Activated CD8-positive, alpha-beta T cell treated with anti-CD3 and anti-CD28 coated beads for 36 hours (primary cell): ENCODE measurements at regions of chr6 and their contacts with region 1.

Region 1: GRCh38 chr6:11496152-11497060 is 41.1 kb upstream of the TMEM170B start:
- DNase-seq: peak; percentile 78
- ATAC-seq: peak; percentile 97
- H3K4me3 Mint-ChIP-seq: no peak overlapping the region
- H3K27ac Mint-ChIP-seq: peak overlapping the region; percentile 32
- H3K4me1 Mint-ChIP-seq: peaks cover 12% of the 10 kb centered on the region
- H3K27me3 Mint-ChIP-seq: no peaks in the 10 kb centered on the region
- CTCF ChIP-seq: peak; percentile 98

Region 2: DNA sequence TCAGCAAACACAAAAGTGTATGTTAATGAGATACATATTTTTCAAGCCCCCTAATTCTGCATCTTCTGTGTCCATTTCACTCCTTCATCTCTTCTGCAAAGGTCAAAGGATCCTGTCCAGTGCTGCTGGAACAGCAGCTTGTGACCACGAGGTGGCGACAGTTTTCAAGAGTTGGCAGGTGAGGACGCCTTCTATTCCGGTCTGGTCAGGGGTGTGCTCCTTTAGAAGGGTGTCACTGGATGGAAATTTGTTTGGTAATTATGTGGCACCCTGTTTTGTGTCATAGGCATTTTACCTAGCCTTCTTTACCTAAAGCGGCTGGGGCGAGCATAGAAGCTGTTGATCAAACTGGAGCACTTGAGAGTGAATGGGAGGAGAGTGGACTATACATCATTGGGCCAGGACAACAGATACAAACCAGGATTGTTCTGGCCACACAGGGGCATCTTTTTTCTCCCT is 352.0 kb before region 1 on chr6:
- CTCF ChIA-PET with region 1: interaction called, 86 read pairs
- POLR2A ChIA-PET with region 1: interaction called, 10 read pairs
- intact Hi-C with region 1: loop called (anchors 1 kb)
- DNase-seq: peak; percentile 87
- ATAC-seq: peak; percentile 96
- H3K4me3 Mint-ChIP-seq: no peak overlapping the region
- H3K27ac Mint-ChIP-seq: no peak overlapping the region
- H3K4me1 Mint-ChIP-seq: peaks cover 11% of the 10 kb centered on the region
- H3K27me3 Mint-ChIP-seq: no peaks in the 10 kb centered on the region
- CTCF ChIP-seq: peak; percentile 85

Region 3: DNA sequence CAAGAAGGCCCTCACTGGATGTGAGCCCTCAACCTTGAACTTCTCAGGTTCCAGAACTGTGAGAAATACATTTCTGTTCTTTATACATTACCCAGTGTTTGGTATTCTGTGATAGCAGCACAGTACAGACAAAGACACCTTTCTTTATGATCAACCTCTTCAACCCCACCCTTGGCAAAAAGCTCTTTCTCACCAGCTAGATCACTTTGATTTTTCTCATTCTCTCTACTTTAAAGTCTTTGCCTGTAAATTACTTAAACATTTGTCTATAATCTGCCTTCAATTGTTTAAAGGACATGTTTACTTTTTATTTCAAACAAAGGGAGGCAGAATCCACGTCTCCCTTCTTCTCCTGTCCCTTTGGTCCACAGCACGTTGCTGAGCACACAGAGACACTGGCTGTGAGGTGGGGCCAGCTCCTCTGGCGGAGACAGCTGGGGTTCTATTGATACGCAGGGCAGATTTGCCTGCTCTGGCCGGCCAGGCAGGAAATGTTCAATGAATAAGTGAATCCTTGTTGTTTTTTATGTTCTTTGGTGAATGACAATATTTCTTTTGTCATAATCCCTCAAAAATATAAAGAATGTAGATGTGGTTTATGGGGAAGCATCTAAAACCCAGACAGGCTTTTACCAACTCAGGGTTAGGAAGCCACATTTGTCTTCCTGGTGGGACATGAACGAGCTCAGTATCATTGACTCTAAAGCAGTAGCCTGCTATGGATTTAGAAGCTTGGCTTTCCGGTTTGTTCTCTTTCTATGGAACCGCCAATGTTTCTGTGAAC is 316.8 kb before region 1 on chr6:
- CTCF ChIA-PET with region 1: interaction called, 98 read pairs
- POLR2A ChIA-PET with region 1: interaction called, 4 read pairs
- intact Hi-C with region 1: no loop called
- DNase-seq: no peak
- ATAC-seq: no peak
- H3K4me3 Mint-ChIP-seq: no peak overlapping the region
- H3K27ac Mint-ChIP-seq: no peak overlapping the region
- H3K4me1 Mint-ChIP-seq: no peaks in the 10 kb centered on the region
- H3K27me3 Mint-ChIP-seq: no peaks in the 10 kb centered on the region
- CTCF ChIP-seq: no peak

Region 4: DNA sequence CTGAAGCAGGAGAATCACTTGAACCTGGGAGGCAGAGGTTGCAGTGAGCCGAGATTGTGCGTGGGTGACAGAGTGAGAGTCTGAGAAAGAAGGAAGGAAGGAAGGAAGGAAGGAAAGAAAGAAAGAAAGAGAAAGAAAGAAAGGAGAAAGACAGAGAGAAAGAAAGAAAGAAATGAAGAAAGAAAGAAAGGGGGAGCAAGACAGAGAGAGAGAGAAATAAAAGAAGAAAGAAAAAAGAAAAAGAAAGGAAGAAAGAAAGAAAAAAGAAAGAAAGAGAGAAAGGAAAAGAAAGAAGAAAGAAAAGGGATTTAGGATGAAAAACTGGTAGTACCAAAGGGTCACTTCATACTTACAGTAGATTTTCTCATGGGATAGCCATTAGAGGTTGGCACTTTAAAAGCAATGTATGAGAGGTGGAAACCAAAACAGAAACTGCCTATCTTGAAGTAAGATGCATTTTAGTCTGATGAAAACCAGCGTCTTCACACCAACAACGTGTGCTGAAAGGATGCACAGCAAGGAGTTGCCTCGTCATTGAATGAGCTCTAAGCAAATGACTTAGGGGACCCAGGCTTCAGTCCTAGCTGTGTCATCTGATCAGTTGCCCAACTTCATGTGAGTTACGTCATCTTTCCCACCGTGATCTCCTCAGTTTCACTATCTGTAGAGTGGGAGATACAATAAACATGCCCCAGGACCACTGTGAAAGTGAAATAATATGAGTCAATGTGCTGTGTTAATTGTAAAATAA is 130.0 kb before region 1 on chr6:
- CTCF ChIA-PET with region 1: interaction called, 13 read pairs
- POLR2A ChIA-PET with region 1: interaction called, 3 read pairs
- intact Hi-C with region 1: no loop called
- DNase-seq: peak; percentile 77
- ATAC-seq: peak; percentile 74
- H3K4me3 Mint-ChIP-seq: peak overlapping the region; percentile 39
- H3K27ac Mint-ChIP-seq: peak overlapping the region; percentile 86
- H3K4me1 Mint-ChIP-seq: peaks cover 94% of the 10 kb centered on the region
- H3K27me3 Mint-ChIP-seq: no peaks in the 10 kb centered on the region
- CTCF ChIP-seq: peak; percentile 30

Region 5: GRCh38 chr6:11475016-11475415 is 21.4 kb before region 1 on chr6:
- CTCF ChIA-PET with region 1: interaction called, 26 read pairs
- POLR2A ChIA-PET with region 1: no interaction called
- intact Hi-C with region 1: no loop called
- DNase-seq: no peak
- ATAC-seq: no peak
- H3K4me3 Mint-ChIP-seq: no peak overlapping the region
- H3K27ac Mint-ChIP-seq: no peak overlapping the region
- H3K4me1 Mint-ChIP-seq: no peaks in the 10 kb centered on the region
- H3K27me3 Mint-ChIP-seq: peaks cover 6% of the 10 kb centered on the region
- CTCF ChIP-seq: no peak

Region 6: GRCh38 chr6:11754625-11755271 is 258.3 kb after region 1 on chr6:
- CTCF ChIA-PET with region 1: no interaction called
- POLR2A ChIA-PET with region 1: no interaction called
- intact Hi-C with region 1: no loop called
- DNase-seq: no peak
- ATAC-seq: no peak
- H3K4me3 Mint-ChIP-seq: no peak overlapping the region
- H3K27ac Mint-ChIP-seq: no peak overlapping the region
- H3K4me1 Mint-ChIP-seq: peaks cover 10% of the 10 kb centered on the region
- H3K27me3 Mint-ChIP-seq: no peaks in the 10 kb centered on the region
- CTCF ChIP-seq: no peak